ENCODE measurements at regions of chr2 and their contacts with region 1.

Region 1: GRCh38 chr2:64359892-64360657 is 93.9 kb upstream of the LGALSL start:
- DNase-seq: peak; percentile 80
- H3K4me3 ChIP-seq: no peak overlapping the region
- H3K27ac ChIP-seq: no peak overlapping the region
- H3K4me1 ChIP-seq: peaks cover 3% of the 10 kb centered on the region
- H3K27me3 ChIP-seq: peaks cover 6 to 22% of the 10 kb centered on the region in 2 experiments
- CTCF ChIP-seq: no peak
- POLR2A ChIP-seq: no peak

Region 2: GRCh38 chr2:64263309-64263708 is 96.8 kb before region 1 on chr2:
- CTCF ChIA-PET with region 1: no interaction called
- POLR2A ChIA-PET with region 1: no interaction called
- dilution Hi-C with region 1: no loop called
- intact Hi-C with region 1: no loop called
- DNase-seq: peak; percentile 91
- H3K4me3 ChIP-seq: peak overlapping the region in 1 of 3 experiments; percentile 0
- H3K27ac ChIP-seq: peak overlapping the region; percentile 99
- H3K4me1 ChIP-seq: peaks cover 62% of the 10 kb centered on the region
- H3K27me3 ChIP-seq: no peaks in the 10 kb centered on the region
- CTCF ChIP-seq: no peak
- POLR2A ChIP-seq: no peak

Region 3: DNA sequence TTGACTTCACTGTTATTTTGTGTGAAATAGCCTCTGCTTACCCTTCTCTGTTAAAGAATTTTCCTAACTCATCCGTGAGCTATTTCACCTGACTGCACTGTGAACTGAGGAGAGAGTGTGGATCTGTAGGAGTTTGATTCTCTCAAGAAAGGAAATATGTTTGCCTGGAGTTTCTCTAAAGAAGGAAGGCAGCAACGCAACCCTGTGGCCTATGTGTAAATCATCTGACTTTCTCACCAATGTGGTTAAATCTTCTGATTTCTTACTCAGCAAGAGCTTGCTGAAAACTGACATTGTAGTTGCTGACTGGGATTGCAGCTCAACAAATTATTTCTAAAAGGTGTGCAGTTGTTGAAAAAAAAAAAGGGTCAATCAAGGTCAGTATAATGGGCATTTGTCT is 61.9 kb before region 1 on chr2:
- CTCF ChIA-PET with region 1: no interaction called
- POLR2A ChIA-PET with region 1: no interaction called
- dilution Hi-C with region 1: no loop called
- intact Hi-C with region 1: no loop called
- DNase-seq: no peak
- H3K4me3 ChIP-seq: no peak overlapping the region
- H3K27ac ChIP-seq: no peak overlapping the region
- H3K4me1 ChIP-seq: no peaks in the 10 kb centered on the region
- H3K27me3 ChIP-seq: peaks cover 0 to 11% of the 10 kb centered on the region in 2 experiments
- CTCF ChIP-seq: no peak
- POLR2A ChIP-seq: no peak

Region 4: GRCh38 chr2:64393383-64394010 is 33.4 kb after region 1 on chr2:
- CTCF ChIA-PET with region 1: no interaction called
- POLR2A ChIA-PET with region 1: no interaction called
- dilution Hi-C with region 1: no loop called
- intact Hi-C with region 1: loop called (anchors 1 kb)
- DNase-seq: no peak
- H3K4me3 ChIP-seq: no peak overlapping the region
- H3K27ac ChIP-seq: no peak overlapping the region
- H3K4me1 ChIP-seq: no peaks in the 10 kb centered on the region
- H3K27me3 ChIP-seq: peaks cover 2 to 17% of the 10 kb centered on the region in 2 experiments
- CTCF ChIP-seq: no peak
- POLR2A ChIP-seq: no peak

Region 5: DNA sequence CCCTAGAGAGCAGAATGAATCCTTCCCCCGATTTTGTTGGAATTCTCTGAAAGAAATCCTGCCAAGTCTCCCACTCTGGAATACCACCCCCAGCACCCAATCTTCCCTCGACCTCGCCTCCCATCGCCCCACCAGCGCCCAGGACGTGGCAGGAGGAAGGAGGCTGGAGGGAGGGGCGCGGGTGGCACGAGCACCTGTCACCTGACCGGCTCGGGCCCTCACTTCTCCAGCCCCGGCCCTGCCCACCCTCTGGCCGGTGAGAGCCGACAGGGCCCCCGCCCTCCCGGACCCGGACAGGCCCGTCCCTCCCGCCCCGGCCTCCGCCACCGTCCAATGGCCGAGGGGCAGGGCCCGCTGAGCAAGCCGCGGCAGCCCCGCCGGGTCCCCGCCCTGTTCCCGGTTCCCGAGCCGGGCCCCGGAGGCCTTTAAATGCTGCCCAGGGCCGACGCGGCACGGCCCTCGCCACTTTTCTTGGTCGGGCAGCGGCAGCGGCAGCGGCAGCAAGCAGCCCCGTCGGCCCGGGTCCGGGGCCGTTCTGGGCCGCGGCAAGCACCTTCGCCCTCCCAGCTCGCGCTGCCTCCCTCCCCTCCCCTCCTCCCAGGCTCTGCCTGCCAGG is 93.8 kb after region 1 on chr2 and contains the start of gene LGALSL:
- CTCF ChIA-PET with region 1: interaction called, 3 read pairs
- POLR2A ChIA-PET with region 1: interaction called, 3 read pairs
- dilution Hi-C with region 1: no loop called
- intact Hi-C with region 1: loop called (anchors 1 kb)
- DNase-seq: peak; percentile 66
- H3K4me3 ChIP-seq: peak within 1 kb of the TSS; percentile 60 to 93 (median 65)
- H3K27ac ChIP-seq: peak within 1 kb of the TSS; percentile 65
- H3K4me1 ChIP-seq: peaks cover 8% of the 10 kb centered on the region
- H3K27me3 ChIP-seq: peaks cover under 1 to 4% of the 10 kb centered on the region in 2 experiments
- CTCF ChIP-seq: no peak
- POLR2A ChIP-seq: no peak
- total RNA-seq, gene LGALSL: 2.3 and 5.8 TPM in 2 replicates

Region 6: DNA sequence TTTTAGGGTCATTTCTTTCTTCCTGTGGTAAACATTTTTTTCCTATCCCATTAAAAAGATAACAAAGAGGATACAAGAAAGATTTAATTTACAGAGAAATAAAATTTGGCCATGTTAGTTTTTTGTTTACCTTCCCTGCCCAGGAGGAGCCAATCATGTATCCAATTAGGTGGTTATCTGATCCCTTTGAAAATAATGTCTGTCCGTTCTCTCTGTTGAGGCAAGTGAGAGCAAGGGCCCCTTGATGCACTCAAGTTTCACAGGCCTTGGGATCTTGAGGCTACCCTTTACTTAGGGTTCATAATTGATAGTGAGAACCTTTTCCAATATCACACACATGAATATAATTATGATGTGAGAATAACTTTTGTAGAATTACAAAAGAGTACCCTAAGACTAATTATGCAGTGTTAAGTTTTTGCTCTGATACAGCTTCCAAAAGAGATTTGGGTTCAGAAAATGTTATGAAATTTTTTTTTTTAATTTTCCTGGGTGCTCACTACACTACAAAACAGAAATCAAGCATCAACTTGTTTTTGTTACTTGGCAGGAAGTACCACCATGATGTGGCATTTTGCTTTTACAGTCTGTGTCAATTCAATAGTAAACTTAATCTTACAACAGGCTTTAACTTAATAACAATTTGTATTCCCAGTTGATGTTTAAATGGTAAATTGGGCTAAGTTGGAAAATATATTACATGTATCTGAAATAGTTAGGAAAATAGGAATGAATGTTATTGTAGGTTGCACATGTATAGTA is 206.1 kb after region 1 on chr2:
- CTCF ChIA-PET with region 1: no interaction called
- POLR2A ChIA-PET with region 1: no interaction called
- dilution Hi-C with region 1: no loop called
- intact Hi-C with region 1: no loop called
- DNase-seq: no peak
- H3K4me3 ChIP-seq: no peak overlapping the region
- H3K27ac ChIP-seq: no peak overlapping the region
- H3K4me1 ChIP-seq: no peaks in the 10 kb centered on the region
- H3K27me3 ChIP-seq: no peaks in the 10 kb centered on the region
- CTCF ChIP-seq: no peak
- POLR2A ChIP-seq: no peak